ENCODE measurements at regions of chr5 and their contacts with region 1.

Region 1: GRCh38 chr5:154857530-154858296 is 714 bp upstream of the CNOT8 start:
- DNase-seq: peak; percentile 76 to 95 (median 88)
- ATAC-seq: peak; percentile 48
- H3K4me3 ChIP-seq: peak overlapping the region; percentile 64 to 76
- H3K4me3 Mint-ChIP-seq: peak overlapping the region; percentile 86
- H3K27ac ChIP-seq: peak overlapping the region; percentile 90 to 97
- H3K27ac Mint-ChIP-seq: peak overlapping the region; percentile 94
- H3K4me1 ChIP-seq: peaks cover 31% of the 10 kb centered on the region
- H3K4me1 Mint-ChIP-seq: peaks cover 39% of the 10 kb centered on the region
- H3K27me3 ChIP-seq: no peaks in the 10 kb centered on the region
- H3K27me3 Mint-ChIP-seq: no peaks in the 10 kb centered on the region
- CTCF ChIP-seq: no peak

Region 2: DNA sequence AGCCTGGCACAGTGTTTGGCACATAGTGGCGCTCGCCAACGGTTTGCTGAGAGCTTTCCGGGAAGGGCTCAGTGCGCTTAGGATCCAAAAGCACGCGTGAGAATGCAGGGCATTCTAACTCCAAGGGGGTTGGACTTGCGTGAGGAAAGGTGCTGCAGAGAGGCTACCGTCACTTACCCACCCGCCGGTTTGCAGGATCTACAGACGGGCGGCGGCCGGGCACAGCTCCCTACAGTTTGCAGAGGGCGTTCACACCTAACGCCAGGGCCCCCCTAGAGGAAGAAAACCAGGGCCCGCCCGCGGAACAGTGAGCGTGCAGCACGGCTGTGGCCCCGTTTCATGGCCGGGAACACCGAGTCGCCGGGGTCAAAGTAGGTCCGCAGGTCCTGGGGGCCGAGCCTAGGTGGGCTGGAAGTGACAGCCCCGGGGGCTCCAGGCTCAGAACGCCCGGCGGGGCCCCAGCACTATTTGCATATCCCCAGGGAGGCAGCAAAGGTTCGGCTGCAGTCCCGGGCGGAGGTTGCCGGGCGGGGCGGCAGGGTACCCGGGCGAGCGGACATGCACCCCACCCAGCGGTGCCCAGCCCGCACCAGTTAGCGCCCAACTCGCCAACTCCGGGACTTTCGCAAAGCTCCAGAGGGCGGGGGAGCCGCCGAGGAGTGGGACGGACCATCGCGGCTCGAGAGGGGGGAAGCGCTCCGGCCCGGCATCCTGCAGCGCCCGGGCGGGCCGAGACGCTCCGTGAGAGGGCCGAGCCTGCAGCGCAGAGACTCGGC is 667.7 kb before region 1 on chr5:
- CTCF ChIA-PET with region 1: no interaction called
- POLR2A ChIA-PET with region 1: no interaction called
- intact Hi-C with region 1: loop called (anchors 5 to 10 kb)
- DNase-seq: peak; percentile 65 to 93 (median 82)
- ATAC-seq: peak; percentile 81
- H3K4me3 ChIP-seq: peak overlapping the region; percentile 86 to 89
- H3K4me3 Mint-ChIP-seq: peak overlapping the region; percentile 82
- H3K27ac ChIP-seq: peak overlapping the region; percentile 60 to 72
- H3K27ac Mint-ChIP-seq: peak overlapping the region; percentile 81
- H3K4me1 ChIP-seq: peaks cover 26% of the 10 kb centered on the region
- H3K4me1 Mint-ChIP-seq: peaks cover 36% of the 10 kb centered on the region
- H3K27me3 ChIP-seq: no peaks in the 10 kb centered on the region
- H3K27me3 Mint-ChIP-seq: no peaks in the 10 kb centered on the region
- CTCF ChIP-seq: peak; percentile 57

Region 3: DNA sequence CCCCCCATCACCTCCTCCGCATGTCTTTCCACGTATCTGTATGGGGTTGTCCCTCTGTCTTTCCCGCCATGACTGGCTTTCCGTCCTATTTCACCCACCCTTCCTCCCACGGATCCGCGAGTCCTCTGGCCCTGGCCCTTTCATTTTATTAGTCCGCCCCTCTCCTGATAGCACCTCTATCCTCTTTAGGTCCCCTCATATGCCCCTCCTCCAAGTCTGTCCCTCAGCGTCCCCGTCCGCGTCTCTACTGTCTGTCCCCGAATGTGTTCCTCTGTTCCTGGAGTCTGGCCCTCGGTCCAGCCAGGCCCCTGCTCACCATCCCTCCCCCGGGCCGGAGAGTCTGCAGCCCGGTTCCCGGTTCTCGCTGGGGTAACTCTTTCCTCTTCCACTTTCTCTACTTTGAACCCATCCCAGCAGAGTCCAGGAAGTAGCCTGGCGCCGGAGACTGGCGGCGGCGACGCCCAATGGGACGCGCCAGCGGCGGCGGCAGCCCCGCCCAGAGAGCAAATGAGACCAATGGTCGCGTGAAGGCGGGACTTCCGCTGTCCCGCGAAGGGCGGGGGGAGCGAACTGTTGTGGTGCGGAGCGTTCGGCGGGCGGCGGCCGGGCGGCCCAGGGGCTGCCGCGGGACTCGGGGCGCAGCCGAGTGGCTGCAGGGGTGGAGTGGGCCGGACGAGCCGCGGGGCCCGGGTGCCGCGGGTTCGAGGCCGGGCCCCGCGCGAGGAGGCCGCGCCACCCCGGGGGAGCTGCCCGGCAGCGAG is 412.1 kb before region 1 on chr5 and contains the start of gene SAP30L:
- CTCF ChIA-PET with region 1: no interaction called
- POLR2A ChIA-PET with region 1: no interaction called
- intact Hi-C with region 1: loop called (anchors 1 kb)
- DNase-seq: peak; percentile 92 to 98 (median 95)
- ATAC-seq: peak; percentile 93
- H3K4me3 ChIP-seq: peak within 1 kb of the TSS; percentile 98 to 100
- H3K4me3 Mint-ChIP-seq: peak within 1 kb of the TSS; percentile 98
- H3K27ac ChIP-seq: peak within 1 kb of the TSS; percentile 77 to 79
- H3K27ac Mint-ChIP-seq: peak within 1 kb of the TSS; percentile 96
- H3K4me1 ChIP-seq: peaks cover 40% of the 10 kb centered on the region
- H3K4me1 Mint-ChIP-seq: peaks cover 64% of the 10 kb centered on the region
- H3K27me3 ChIP-seq: no peaks in the 10 kb centered on the region
- H3K27me3 Mint-ChIP-seq: no peaks in the 10 kb centered on the region
- CTCF ChIP-seq: no peak
- total RNA-seq, gene SAP30L: 24.1 to 25.4 TPM

Region 4: DNA sequence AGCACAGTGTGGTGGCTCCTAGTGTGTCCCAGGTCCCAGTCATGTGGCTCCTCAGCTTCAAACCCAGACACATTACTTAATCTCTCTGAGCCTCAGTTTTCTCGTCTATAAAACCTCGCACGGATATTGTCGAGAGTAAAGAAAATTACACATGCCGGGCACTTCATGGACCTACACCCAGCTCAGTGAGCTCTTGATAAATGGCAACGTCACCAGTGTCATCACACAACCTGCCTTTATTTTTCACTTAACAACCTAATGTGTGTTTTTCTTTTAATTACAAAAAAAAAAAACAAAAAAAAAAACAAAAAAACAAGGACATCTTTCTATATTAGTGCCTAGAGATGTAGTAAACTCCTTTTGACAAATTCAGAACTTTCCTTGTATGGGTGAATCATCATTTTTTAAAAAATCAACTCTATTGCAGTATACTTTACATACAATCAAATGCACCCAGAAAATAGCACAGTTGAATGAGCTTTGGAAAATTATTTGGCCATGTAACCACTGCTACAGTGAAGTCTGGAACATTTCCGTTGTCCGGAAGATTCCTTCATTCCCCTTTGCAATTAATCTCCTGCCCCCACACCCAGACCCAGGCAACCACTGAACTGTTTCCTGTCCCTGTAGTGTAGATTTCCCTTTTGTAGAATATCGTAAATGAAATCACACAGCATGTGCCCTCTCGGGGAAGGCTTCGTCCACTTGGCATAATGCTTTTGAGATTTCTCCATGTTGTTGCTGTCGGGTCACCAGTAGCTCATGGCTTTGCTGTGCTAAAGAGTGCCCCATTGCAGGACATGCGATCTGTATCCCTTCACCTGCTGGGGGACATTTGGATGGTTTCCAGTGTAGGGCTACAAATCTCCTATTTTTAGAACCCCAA is 203.0 kb before region 1 on chr5:
- CTCF ChIA-PET with region 1: interaction called, 4 read pairs
- POLR2A ChIA-PET with region 1: interaction called, 3 read pairs
- intact Hi-C with region 1: loop called (anchors 1 to 5 kb)
- DNase-seq: no peak
- ATAC-seq: no peak
- H3K4me3 ChIP-seq: no peak overlapping the region
- H3K4me3 Mint-ChIP-seq: no peak overlapping the region
- H3K27ac ChIP-seq: no peak overlapping the region
- H3K27ac Mint-ChIP-seq: no peak overlapping the region
- H3K4me1 ChIP-seq: peaks cover 8% of the 10 kb centered on the region
- H3K4me1 Mint-ChIP-seq: peaks cover 9% of the 10 kb centered on the region
- H3K27me3 ChIP-seq: no peaks in the 10 kb centered on the region
- H3K27me3 Mint-ChIP-seq: no peaks in the 10 kb centered on the region
- CTCF ChIP-seq: no peak

Region 5: DNA sequence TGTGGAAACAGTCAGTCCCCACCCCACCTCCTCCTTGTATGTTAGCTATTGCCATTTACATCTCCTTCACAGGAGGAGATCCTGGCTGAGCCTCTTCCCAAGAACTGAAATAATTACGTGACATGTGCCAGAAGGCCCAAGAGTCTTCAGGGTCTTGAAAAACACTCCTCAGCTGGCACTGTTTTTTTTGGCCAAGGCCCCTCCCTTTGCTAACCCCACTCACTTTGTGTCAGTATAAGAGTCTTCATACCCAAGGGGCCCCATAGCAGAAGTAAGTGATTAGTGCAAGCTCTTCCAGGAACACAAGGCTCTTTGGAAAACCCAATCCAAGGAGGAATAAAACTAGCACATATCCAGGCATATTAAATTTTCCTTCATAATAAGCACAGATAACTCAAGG is 108.2 kb before region 1 on chr5:
- CTCF ChIA-PET with region 1: no interaction called
- POLR2A ChIA-PET with region 1: no interaction called
- intact Hi-C with region 1: no loop called
- DNase-seq: no peak
- ATAC-seq: no peak
- H3K4me3 ChIP-seq: no peak overlapping the region
- H3K4me3 Mint-ChIP-seq: no peak overlapping the region
- H3K27ac ChIP-seq: no peak overlapping the region
- H3K27ac Mint-ChIP-seq: no peak overlapping the region
- H3K4me1 ChIP-seq: peaks cover 11% of the 10 kb centered on the region
- H3K4me1 Mint-ChIP-seq: peaks cover 14% of the 10 kb centered on the region
- H3K27me3 ChIP-seq: no peaks in the 10 kb centered on the region
- H3K27me3 Mint-ChIP-seq: no peaks in the 10 kb centered on the region
- CTCF ChIP-seq: no peak

Region 6: GRCh38 chr5:154811653-154812365 is 45.9 kb before region 1 on chr5:
- CTCF ChIA-PET with region 1: no interaction called
- POLR2A ChIA-PET with region 1: interaction called, 3 read pairs
- intact Hi-C with region 1: loop called (anchors 1 to 5 kb)
- DNase-seq: peak; percentile 40 to 77 (median 69)
- ATAC-seq: peak; percentile 69
- H3K4me3 ChIP-seq: no peak overlapping the region
- H3K4me3 Mint-ChIP-seq: no peak overlapping the region
- H3K27ac ChIP-seq: no peak overlapping the region
- H3K27ac Mint-ChIP-seq: peak overlapping the region; percentile 66
- H3K4me1 ChIP-seq: peaks cover 26% of the 10 kb centered on the region
- H3K4me1 Mint-ChIP-seq: peaks cover 33% of the 10 kb centered on the region
- H3K27me3 ChIP-seq: no peaks in the 10 kb centered on the region
- H3K27me3 Mint-ChIP-seq: no peaks in the 10 kb centered on the region
- CTCF ChIP-seq: peak; percentile 95

Measured in CD8-positive, alpha-beta T cell (primary cell).